Kidney (tissue), 22 donors: ENCODE measurements at regions of chr13 and their contacts with region 1.

Region 1: DNA sequence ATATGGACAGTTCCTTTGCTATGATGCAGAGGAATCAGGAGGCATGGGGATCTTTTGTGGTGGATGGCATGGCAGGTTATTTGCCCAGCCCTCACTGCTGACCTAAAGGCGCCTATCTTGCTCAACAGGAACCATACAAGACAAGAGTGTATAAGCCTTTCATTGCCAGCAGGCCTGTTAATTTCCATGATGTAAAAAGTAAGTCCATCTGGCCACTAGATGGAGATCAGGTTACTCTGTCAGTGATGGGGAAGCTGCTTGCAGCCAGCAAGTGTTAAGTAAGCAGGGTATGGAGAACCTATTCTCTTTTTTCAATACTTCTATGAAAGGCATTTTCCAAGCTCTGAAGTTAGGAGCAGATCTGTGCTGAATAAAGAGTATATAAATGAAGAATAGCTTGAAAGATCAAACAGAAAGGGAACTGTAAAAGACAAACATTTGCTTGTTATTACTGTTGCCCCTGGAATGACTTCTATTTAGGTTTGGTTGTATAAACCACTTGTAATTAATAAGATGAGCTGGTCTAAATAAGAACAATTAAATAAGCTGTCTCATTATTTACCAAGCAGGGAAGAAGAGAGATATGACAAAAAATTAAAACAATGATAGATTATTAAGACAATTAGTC is 210.9 kb downstream of the RGCC start:
- DNase-seq: peak in 4 of 5 donors; percentile 63 to 95 (median 80)
- H3K4me3 ChIP-seq: no peak overlapping the region
- H3K27ac ChIP-seq: no peak overlapping the region
- H3K4me1 ChIP-seq: no peaks in the 10 kb centered on the region
- H3K27me3 ChIP-seq: no peaks in the 10 kb centered on the region
- CTCF ChIP-seq: peak; percentile 82

Region 2: GRCh38 chr13:41401366-41401765 is 266.9 kb before region 1 on chr13:
- intact Hi-C with region 1: no loop called
- DNase-seq: peak in 4 of 5 donors; percentile 51 to 59 (median 57)
- H3K4me3 ChIP-seq: no peak overlapping the region
- H3K27ac ChIP-seq: no peak overlapping the region
- H3K4me1 ChIP-seq: no peaks in the 10 kb centered on the region
- H3K27me3 ChIP-seq: no peaks in the 10 kb centered on the region
- CTCF ChIP-seq: no peak

Region 3: GRCh38 chr13:42110410-42111155 is 442.3 kb after region 1 on chr13:
- intact Hi-C with region 1: loop called (anchors 10 kb)
- DNase-seq: peak in 3 of 5 donors; percentile 21 to 90 (median 86)
- H3K4me3 ChIP-seq: no peak overlapping the region
- H3K27ac ChIP-seq: no peak overlapping the region
- H3K4me1 ChIP-seq: peaks cover 0 to 5% (median under 1%) of the 10 kb centered on the region in 3 donors
- H3K27me3 ChIP-seq: no peaks in the 10 kb centered on the region
- CTCF ChIP-seq: peak; percentile 77